Gastrocnemius medialis (tissue), 4 donors: ENCODE measurements at regions of chr7 and their contacts with region 1.

Region 1: DNA sequence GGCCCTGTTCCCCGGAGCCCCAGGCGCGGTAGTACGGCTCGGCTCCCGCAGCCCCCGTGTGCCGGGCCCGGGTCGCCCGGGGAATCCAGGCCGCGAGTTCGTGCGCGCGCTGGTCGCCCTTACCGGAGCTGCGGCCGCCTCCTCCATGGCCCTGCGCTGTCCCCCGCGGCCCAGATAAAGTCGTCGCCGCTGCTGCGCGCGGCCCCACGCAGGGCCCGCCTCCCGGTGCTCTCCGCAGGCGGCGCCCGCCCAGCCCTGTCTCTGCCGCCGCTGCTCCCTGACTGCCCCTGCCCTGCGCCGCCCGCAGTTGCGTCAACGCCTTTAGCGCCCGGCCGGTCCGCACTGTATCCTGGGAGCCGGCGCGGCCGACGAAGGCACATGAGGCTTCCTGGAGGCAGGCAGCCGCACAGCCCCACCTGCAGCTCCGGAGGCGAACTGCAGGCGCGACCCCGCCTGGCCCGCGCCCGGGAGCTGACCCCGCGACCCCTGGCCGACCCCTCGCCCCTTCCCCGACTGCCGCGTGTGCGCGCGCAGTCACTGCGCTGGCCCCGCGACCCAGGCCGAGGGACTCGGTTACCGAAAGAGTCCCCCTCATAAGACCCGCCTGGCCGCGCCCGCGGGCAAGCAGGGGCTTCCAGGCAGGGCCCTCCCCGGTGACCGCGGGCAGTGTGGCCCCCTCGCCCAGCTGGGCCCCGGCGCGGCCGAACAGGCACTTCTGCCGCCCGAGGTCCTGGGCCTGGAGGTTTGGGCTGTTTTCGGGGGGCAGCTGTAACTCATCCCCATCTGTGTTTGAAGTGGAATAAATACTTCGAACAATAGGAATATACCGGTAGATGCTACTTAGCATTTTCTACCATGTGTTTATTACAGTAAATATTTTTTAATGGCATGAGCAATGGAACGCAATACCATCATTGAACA is 127.1 kb upstream of the ZNF746 start:
- DNase-seq: peak; percentile 87 to 92
- ATAC-seq: peak; percentile 90 to 92
- H3K4me3 ChIP-seq: peak overlapping the region; percentile 86 to 96 (median 90)
- H3K27ac ChIP-seq: peak overlapping the region; percentile 78 to 91 (median 90)
- H3K4me1 ChIP-seq: peaks cover 16 to 27% of the 10 kb centered on the region in 2 donors
- H3K27me3 ChIP-seq: no peaks in the 10 kb centered on the region
- CTCF ChIP-seq: peak; percentile 86 to 99 (median 96)
- POLR2A ChIP-seq: peak; percentile 76 to 83

Region 2: DNA sequence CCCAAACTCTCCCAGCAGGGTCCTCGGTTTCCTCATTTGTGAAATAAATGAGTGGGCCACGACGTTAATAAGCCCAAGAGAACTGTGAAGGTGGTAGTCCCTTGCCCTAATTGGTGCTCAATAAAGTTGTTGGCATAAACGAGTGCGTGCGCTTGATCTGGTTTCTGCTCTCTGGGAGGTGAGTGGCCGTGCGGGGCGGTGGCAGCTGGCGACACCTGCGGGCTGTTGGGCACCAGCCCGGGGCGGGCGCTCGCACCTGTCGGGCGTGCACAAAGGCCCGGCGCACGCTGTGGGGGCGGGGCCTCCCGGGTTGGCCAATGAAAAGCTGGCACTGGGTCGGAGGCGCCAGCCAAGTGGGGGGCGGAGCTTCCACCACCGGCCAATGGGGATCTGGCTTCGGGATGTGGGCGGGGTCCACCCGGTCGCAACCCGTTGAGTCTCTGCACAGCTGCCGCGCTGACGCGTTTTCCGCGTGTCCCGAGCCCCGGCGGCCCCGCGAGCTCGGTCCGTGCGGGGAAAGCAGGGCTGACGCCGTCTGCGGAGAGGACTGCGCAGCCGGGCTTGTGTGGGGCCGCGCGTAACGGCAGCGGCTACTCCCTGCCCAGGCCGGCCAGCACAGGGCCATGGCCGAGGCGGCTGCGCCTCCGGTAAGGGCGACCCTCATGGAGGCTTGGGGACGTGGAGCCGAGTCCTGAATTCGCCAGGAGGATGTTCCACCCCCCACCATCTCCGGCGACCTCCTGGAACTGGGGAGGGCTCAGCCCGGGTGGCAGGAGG is 339.6 kb before region 1 on chr7:
- in situ Hi-C with region 1: no loop called
- intact Hi-C with region 1: loop called (anchors 10 kb)
- DNase-seq: peak; percentile 95 to 97
- ATAC-seq: peak; percentile 97
- H3K4me3 ChIP-seq: peak overlapping the region; percentile 68 to 86 (median 78)
- H3K27ac ChIP-seq: peak overlapping the region; percentile 77 to 89 (median 84)
- H3K4me1 ChIP-seq: peaks cover 6 to 11% of the 10 kb centered on the region in 2 donors
- H3K27me3 ChIP-seq: no peaks in the 10 kb centered on the region
- CTCF ChIP-seq: no peak
- POLR2A ChIP-seq: peak; percentile 60 to 65

Region 3: DNA sequence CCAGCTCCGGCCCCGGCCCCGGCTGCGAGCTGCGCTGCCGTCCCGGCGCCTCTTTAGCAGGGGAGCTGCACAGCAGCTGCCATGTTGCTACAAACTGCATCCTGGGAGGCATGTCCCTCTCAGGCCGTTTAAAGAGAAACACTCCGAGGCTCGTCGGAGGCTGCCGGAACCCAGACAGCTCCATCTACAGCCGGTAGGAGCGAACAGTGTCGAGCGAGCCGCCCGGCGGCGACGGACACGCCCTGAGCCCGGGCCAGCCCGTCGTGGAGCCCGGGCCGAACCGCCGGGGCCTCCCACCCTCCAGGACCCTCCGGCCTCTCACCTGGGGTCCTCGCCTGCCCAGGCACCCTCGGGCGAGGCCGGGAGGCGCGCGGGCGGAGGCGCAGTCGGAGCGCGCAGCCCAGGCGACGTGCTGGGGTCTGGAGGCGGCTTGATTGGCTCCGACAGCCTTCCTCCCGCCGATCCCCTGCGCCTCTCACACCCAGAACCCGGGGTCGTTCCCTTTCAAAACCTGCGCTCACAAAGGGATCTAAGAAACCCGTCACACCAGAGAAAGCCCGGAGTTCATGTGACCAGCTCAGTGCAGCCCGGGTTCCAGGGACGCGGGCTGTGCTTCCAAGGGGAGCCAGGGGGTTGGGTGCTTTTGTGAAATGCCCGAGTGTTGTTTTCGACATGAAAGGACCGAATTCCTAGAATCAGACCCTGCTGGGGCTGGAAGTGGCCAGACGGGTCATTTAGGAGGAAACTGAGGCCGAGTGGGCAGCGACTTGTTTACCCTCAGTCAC is 164.0 kb before region 1 on chr7 and contains the start of gene ZNF777:
- in situ Hi-C with region 1: no loop called
- intact Hi-C with region 1: loop called (anchors 2 kb)
- DNase-seq: peak; percentile 70 to 80
- ATAC-seq: peak; percentile 97 to 98
- H3K4me3 ChIP-seq: peak within 1 kb of the TSS; percentile 60 to 93 (median 74)
- H3K27ac ChIP-seq: peak within 1 kb of the TSS; percentile 50 to 77 (median 72)
- H3K4me1 ChIP-seq: peaks cover 14 to 15% of the 10 kb centered on the region in 2 donors
- H3K27me3 ChIP-seq: no peaks in the 10 kb centered on the region
- CTCF ChIP-seq: peak; percentile 22 to 51 (median 39)
- POLR2A ChIP-seq: no peak
- total RNA-seq, gene ZNF777: 7.6 to 17.6 (median 15.1) TPM

Region 4: GRCh38 chr7:149838224-149838947 is 213.7 kb after region 1 on chr7 and contains the start of gene ZNF862:
- in situ Hi-C with region 1: no loop called
- intact Hi-C with region 1: loop called (anchors 2 kb)
- DNase-seq: peak; percentile 97 to 98
- ATAC-seq: peak; percentile 98 to 99
- H3K4me3 ChIP-seq: peak within 1 kb of the TSS; percentile 76 to 99 (median 87)
- H3K27ac ChIP-seq: peak within 1 kb of the TSS; percentile 80 to 95 (median 90)
- H3K4me1 ChIP-seq: peaks cover 23 to 24% of the 10 kb centered on the region in 2 donors
- H3K27me3 ChIP-seq: no peaks in the 10 kb centered on the region
- CTCF ChIP-seq: no peak
- POLR2A ChIP-seq: peak; percentile 62 to 85
- total RNA-seq, gene ZNF862: 2.9 to 10.7 (median 7.0) TPM

Region 5: GRCh38 chr7:149873074-149873969 is 248.6 kb after region 1 on chr7 and contains the start of gene ATP6V0E2:
- in situ Hi-C with region 1: no loop called
- intact Hi-C with region 1: loop called (anchors 5 kb)
- DNase-seq: peak; percentile 95
- ATAC-seq: peak; percentile 91 to 92
- H3K4me3 ChIP-seq: peak within 1 kb of the TSS; percentile 71 to 84 (median 73)
- H3K27ac ChIP-seq: peak within 1 kb of the TSS; percentile 86 to 88 (median 87)
- H3K4me1 ChIP-seq: peaks cover 13 to 14% of the 10 kb centered on the region in 2 donors
- H3K27me3 ChIP-seq: no peaks in the 10 kb centered on the region
- CTCF ChIP-seq: peak in 2 of 5 experiments; percentile 5 to 9
- POLR2A ChIP-seq: peak; percentile 80 to 82
- total RNA-seq, gene ATP6V0E2: 9.0 to 46.3 (median 12.9) TPM